A673 (cell line): ENCODE measurements at regions of chr1 and their contacts with region 1.

Region 1: DNA sequence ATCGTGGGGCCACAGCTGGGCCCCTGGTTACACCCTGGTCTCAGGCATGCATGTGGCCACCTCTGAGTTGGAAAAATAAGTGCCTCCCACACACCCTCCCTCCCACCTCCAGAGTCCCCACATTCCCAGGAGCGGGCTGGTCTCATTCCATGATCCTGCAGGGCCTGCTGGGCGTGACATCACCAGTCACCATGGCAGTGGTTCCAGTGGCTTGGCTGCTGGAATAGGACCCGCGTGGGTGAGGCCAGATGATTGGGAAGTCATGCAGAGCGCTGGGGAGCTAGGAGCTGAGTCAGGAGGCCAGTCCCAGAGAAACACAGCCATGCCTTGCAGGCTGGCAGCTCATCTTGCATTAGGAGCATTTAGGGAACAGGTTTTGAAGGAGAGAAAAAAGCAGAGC is 125.4 kb upstream of the TMEM51 start:
- DNase-seq: no peak
- H3K4me3 ChIP-seq: no peak overlapping the region
- H3K27ac ChIP-seq: no peak overlapping the region
- H3K4me1 ChIP-seq: no peaks in the 10 kb centered on the region
- H3K27me3 ChIP-seq: no peaks in the 10 kb centered on the region
- CTCF ChIP-seq: no peak

Region 2: GRCh38 chr1:14602136-14602535 is 426.0 kb before region 1 on chr1:
- CTCF ChIA-PET with region 1: interaction called, 4 read pairs
- POLR2A ChIA-PET with region 1: no interaction called
- intact Hi-C with region 1: loop called (anchors 10 kb)
- DNase-seq: peak; percentile 75
- H3K4me3 ChIP-seq: no peak overlapping the region
- H3K27ac ChIP-seq: no peak overlapping the region
- H3K4me1 ChIP-seq: peaks cover 25% of the 10 kb centered on the region
- H3K27me3 ChIP-seq: peaks cover 30% of the 10 kb centered on the region
- CTCF ChIP-seq: no peak

Region 3: GRCh38 chr1:14778898-14779865 is 248.9 kb before region 1 on chr1:
- CTCF ChIA-PET with region 1: interaction called, 8 read pairs
- POLR2A ChIA-PET with region 1: no interaction called
- intact Hi-C with region 1: loop called (anchors 5 kb)
- DNase-seq: peak; percentile 55
- H3K4me3 ChIP-seq: no peak overlapping the region
- H3K27ac ChIP-seq: no peak overlapping the region
- H3K4me1 ChIP-seq: no peaks in the 10 kb centered on the region
- H3K27me3 ChIP-seq: no peaks in the 10 kb centered on the region
- CTCF ChIP-seq: peak; percentile 83

Region 4: DNA sequence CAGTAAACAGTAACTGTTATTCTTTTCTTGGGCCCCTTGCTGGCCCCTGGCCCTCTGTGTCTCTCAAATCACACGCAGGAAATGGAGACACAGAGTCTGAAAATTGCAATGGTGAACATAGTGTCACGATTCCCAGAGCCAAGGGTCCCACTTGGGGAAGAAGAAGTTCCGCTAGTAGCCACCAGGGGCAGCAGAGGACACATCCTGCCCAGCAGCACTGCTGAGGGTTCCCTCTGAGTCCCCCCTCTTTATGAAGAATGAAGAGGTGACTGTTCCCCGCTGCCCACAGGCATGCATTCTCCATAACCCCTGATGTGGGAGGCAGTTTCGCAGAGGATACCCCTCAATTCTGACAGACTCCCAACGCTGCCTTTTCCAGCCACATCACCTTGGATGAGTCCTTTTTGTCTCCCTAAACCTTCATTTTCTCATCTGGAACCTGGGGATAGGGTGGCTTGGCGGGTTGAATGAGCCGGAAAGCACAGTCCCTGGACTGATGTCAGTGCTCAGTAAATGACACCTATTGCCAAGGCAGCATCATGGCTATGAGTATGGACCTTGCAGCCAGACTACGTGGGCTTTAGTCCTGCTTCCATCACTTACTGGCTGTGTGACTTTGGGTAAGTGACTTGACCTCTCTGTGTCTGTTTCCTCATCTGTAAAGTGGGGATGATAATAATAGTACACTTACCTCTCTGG is 112.6 kb before region 1 on chr1:
- CTCF ChIA-PET with region 1: no interaction called
- POLR2A ChIA-PET with region 1: no interaction called
- intact Hi-C with region 1: loop called (anchors 10 kb)
- DNase-seq: peak; percentile 66
- H3K4me3 ChIP-seq: no peak overlapping the region
- H3K27ac ChIP-seq: no peak overlapping the region
- H3K4me1 ChIP-seq: no peaks in the 10 kb centered on the region
- H3K27me3 ChIP-seq: no peaks in the 10 kb centered on the region
- CTCF ChIP-seq: peak; percentile 86

Region 5: DNA sequence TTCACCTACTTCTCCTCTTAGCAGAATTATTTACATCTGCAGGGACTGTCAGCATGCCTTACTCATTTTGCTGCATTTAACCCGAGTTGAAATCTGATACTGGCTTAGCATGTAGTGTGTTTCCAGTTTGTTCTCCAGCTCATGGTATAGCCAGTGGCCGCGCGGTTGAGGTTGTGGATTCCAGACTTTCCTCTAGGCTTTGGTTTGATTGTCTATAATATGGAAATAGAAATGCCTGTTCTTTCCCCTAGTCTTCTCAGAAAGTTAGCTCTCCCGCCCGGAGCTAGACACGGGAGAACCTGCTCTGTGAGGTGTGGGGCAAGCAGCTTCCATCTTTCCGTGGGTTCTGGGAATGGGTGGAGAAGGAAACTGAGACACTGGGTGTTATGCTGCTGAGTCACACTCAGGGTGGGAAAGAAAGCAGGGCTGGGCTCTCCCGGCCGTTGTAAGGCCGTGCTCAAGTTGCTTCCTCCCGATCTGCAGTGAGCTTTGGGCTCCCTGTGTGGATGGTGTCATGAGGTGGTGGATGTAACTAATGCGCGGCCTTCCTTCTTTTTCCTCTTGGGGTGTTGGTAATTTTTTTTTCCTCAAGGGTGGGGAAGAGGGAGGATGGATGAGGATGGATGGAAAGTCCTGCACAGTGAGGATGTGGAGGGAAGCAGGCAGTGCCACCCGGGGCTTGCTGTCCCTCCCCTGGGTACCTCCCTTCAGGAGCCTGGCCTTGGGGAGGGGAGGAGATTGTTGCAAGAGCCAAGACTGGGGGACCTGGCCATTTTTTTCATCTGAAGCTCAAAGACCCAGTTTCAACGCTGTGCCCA is 81.2 kb before region 1 on chr1:
- CTCF ChIA-PET with region 1: no interaction called
- POLR2A ChIA-PET with region 1: no interaction called
- intact Hi-C with region 1: no loop called
- DNase-seq: no peak
- H3K4me3 ChIP-seq: no peak overlapping the region
- H3K27ac ChIP-seq: no peak overlapping the region
- H3K4me1 ChIP-seq: peaks cover 8% of the 10 kb centered on the region
- H3K27me3 ChIP-seq: no peaks in the 10 kb centered on the region
- CTCF ChIP-seq: no peak